ENCODE measurements at regions of chr1 and their contacts with region 1.

Region 1: GRCh38 chr1:154198756-154199562 is 7.1 kb upstream of the TPM3 start:
- DNase-seq: peak; percentile 69
- H3K4me3 Mint-ChIP-seq: no peak overlapping the region
- H3K27ac Mint-ChIP-seq: no peak overlapping the region
- H3K4me1 Mint-ChIP-seq: no peaks in the 10 kb centered on the region
- H3K27me3 Mint-ChIP-seq: peaks cover 3% of the 10 kb centered on the region

Region 2: DNA sequence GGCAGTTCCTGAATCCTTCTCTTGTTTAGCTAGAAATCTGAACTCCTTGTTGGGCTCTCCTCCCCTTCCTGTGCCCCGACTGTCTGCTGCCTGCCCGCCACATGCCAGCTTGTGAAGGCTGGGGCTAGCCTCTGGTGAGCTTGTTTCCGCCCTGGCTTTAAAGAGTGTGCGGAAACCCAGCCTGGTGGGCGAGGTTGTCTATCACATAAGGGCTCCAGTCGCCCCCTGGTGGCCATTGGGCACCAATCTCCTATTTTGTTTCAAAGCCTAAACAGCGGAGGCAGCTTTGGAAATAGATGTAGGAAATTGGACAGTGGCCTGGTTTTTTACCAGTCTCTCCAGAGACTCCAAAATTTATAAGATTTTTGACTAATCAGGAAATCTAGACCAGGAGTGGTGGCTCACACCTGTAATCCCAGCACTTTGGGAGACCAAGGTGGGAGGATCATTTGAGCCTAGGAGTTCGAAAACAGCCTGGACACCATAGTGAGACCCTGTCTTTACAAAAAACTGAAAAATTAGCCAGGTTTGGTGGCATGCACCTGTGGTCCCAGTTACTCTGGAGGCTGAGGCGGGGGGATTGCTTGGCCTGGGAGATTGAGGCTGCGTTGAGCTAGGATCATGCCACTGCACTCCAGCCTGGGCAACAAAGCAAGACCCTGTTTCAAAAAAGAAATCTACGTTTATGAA is 136.2 kb after region 1 on chr1:
- CTCF ChIA-PET with region 1: interaction called, 23 read pairs
- intact Hi-C with region 1: loop called (anchors 1 kb)
- DNase-seq: peak; percentile 97
- H3K4me3 Mint-ChIP-seq: peak overlapping the region; percentile 30
- H3K27ac Mint-ChIP-seq: peak overlapping the region; percentile 88
- H3K4me1 Mint-ChIP-seq: peaks cover 62% of the 10 kb centered on the region
- H3K27me3 Mint-ChIP-seq: no peaks in the 10 kb centered on the region

Region 3: GRCh38 chr1:154546264-154547063 is 347.5 kb after region 1 on chr1:
- CTCF ChIA-PET with region 1: interaction called, 5 read pairs
- intact Hi-C with region 1: loop called (anchors 5 kb)
- DNase-seq: peak; percentile 77
- H3K4me3 Mint-ChIP-seq: no peak overlapping the region
- H3K27ac Mint-ChIP-seq: no peak overlapping the region
- H3K4me1 Mint-ChIP-seq: peaks cover 21% of the 10 kb centered on the region
- H3K27me3 Mint-ChIP-seq: no peaks in the 10 kb centered on the region

Measured in activated naive CD4-positive, alpha-beta T cell treated with anti-CD3 and anti-CD28 coated beads for 36 hours (primary cell).